K562 (cell line): ENCODE measurements at regions of chr1 and their contacts with region 1.

Region 1: GRCh38 chr1:11907275-11908094 is 18.7 kb downstream of the KIAA2013 start:
- DNase-seq: peak; percentile 86 to 98 (median 90)
- ATAC-seq: peak; percentile 72
- H3K4me3 ChIP-seq: no peak overlapping the region
- H3K27ac ChIP-seq: peak overlapping the region; percentile 100
- H3K4me1 ChIP-seq: peaks cover 15 to 27% of the 10 kb centered on the region in 2 experiments
- H3K27me3 ChIP-seq: no peaks in the 10 kb centered on the region
- CTCF ChIP-seq: peak; percentile 87 to 98 (median 96)
- EP300 ChIP-seq: no peak
- POLR2A ChIP-seq: no peak
- RAD21 ChIP-seq: peak; percentile 61 to 78

Region 2: DNA sequence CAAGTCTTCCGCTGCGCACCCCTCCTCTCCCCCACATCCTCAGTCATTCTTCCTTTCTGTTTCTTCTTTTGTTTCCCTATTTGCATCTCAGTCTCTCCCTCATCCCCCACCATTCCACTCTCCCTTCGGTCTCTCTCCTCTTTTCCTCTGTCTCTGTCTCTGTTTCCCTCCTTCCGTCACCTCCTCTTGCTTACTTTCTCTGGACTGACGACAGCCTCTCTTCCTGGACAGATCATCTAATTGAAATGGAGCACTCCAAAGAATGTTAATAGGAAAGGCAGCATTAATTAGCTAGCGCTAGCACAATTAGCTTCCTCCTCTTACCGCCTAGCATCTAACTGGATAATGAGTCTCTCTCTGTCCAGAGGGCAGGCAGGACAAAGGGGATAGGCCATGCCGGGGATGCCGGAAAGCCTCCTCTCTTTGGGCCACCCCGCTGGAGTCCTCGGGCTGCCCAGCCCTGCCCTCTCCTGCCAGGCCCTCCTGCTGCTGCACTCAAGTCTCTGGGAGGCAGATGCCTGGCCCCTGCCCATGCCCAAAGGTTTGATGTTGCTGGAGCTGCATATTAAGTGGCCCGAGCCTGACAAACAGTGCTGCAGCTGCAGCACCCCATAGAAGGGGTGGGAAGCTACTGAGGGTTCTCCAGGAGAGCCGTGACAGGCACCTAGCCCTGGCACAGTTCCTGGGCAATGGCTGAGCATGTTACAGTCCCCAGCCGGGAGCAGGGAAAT is 407.7 kb before region 1 on chr1:
- CTCF ChIA-PET with region 1: no interaction called
- POLR2A ChIA-PET with region 1: no interaction called
- in situ Hi-C with region 1: no loop called
- intact Hi-C with region 1: no loop called
- DNase-seq: no peak
- ATAC-seq: no peak
- H3K4me3 ChIP-seq: no peak overlapping the region
- H3K27ac ChIP-seq: no peak overlapping the region
- H3K4me1 ChIP-seq: peaks cover 0 to 10% of the 10 kb centered on the region in 2 experiments; a peak in 2 of 5 replicates
- H3K27me3 ChIP-seq: peaks cover 34 to 49% of the 10 kb centered on the region in 2 experiments; a peak in 4 of 5 replicates
- CTCF ChIP-seq: no peak
- EP300 ChIP-seq: no peak
- POLR2A ChIP-seq: no peak
- RAD21 ChIP-seq: no peak

Region 3: DNA sequence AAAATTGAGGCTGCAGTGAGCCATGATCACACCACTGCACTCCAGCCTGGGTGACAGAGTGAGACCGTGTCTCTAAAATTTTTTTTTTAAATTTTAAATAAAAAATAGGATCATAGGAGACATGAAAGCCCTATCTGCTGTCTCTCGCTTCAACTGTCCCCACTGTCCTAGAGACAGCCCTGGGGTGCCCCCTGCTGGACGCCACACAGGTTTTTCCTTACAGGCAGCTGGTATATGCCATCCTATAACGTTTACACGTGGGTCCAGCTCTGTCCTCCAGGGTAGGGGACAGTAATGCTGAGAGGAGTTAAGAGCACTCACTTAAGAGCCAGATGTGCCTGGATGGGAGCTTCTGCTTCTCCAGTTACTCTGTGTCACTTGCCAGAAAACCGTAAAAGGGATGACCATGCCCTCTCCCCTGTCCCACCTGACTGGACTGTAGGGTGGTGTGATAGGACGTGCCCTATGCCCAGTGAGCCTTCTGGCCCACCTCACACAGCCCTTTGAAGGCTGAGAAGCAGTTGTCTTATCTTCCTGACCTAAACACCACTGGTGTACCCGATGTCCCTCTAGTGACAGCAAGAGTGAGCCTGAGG is 261.7 kb before region 1 on chr1:
- CTCF ChIA-PET with region 1: interaction called, 5 read pairs
- POLR2A ChIA-PET with region 1: interaction called, 13 read pairs
- in situ Hi-C with region 1: no loop called
- intact Hi-C with region 1: no loop called
- DNase-seq: peak; percentile 77 to 90 (median 80)
- ATAC-seq: peak; percentile 59
- H3K4me3 ChIP-seq: no peak overlapping the region
- H3K27ac ChIP-seq: no peak overlapping the region
- H3K4me1 ChIP-seq: peaks cover 15 to 39% of the 10 kb centered on the region in 2 experiments; a peak in 4 of 5 replicates
- H3K27me3 ChIP-seq: peaks cover 2 to 13% of the 10 kb centered on the region in 2 experiments; a peak in 4 of 5 replicates
- CTCF ChIP-seq: peak; percentile 85 to 93 (median 92)
- EP300 ChIP-seq: no peak
- POLR2A ChIP-seq: no peak
- RAD21 ChIP-seq: peak; percentile 80 to 89

Region 4: DNA sequence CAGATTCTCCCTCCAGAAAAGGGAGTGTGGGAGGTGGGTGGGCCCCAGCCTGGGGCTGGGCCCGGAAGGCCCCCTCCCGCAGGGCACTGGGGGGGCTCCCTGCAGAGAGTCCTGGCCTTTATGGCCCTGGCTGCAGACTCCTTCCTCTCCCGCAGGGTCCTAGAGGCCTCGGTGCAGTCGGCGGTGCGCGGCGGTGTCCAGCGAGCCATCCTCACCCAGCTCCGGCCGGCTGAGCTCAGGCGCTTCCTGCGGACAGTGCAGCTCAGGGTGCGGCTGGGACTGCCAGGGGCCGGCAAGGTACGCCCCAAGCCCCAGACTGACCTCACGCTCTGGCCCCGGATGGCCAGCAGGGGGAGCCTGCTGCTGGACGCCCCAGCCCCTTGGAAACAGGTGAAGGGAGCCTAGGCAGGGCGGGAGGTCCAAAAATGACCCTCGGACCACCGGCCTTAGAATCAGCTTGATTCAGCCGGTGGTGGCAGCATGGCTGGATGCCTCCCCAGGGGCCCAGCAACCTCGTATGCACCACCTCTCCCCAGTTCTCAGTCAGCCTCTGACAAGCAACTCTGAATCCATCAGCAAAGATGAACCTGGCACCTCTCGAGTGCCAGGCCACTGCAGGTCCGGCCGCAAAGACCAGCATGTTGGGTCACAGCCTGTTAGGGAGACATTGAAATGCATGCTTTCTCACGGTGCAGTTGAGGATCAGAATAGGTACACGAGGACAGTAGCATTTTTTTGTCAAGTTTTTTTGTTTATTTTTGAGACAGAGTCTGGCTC is 122.3 kb before region 1 on chr1:
- CTCF ChIA-PET with region 1: no interaction called
- POLR2A ChIA-PET with region 1: interaction called, 107 read pairs
- in situ Hi-C with region 1: no loop called
- intact Hi-C with region 1: no loop called
- DNase-seq: peak; percentile 89 to 94 (median 92)
- ATAC-seq: peak; percentile 78
- H3K4me3 ChIP-seq: no peak overlapping the region
- H3K27ac ChIP-seq: peak overlapping the region; percentile 80; the same call in 2 of the 3 replicates
- H3K4me1 ChIP-seq: peaks cover 45 to 66% of the 10 kb centered on the region in 2 experiments
- H3K27me3 ChIP-seq: no peaks in the 10 kb centered on the region
- CTCF ChIP-seq: peak; percentile 90 to 96 (median 92)
- EP300 ChIP-seq: peak; percentile 47; the same call in 1 of the 2 replicates
- POLR2A ChIP-seq: peak; percentile 66
- RAD21 ChIP-seq: peak; percentile 67 to 83

Region 5: GRCh38 chr1:11838349-11839272 is 68.9 kb before region 1 on chr1:
- CTCF ChIA-PET with region 1: interaction called, 20 read pairs
- POLR2A ChIA-PET with region 1: interaction called, 304 read pairs
- in situ Hi-C with region 1: no loop called
- intact Hi-C with region 1: loop called (anchors 1 kb)
- DNase-seq: peak; percentile 87 to 92 (median 89)
- ATAC-seq: peak; percentile 85
- H3K4me3 ChIP-seq: no peak overlapping the region
- H3K27ac ChIP-seq: no peak overlapping the region; the same call in 2 of the 3 replicates
- H3K4me1 ChIP-seq: peaks cover 29 to 47% of the 10 kb centered on the region in 2 experiments
- H3K27me3 ChIP-seq: no peaks in the 10 kb centered on the region
- CTCF ChIP-seq: peak; percentile 98 to 99 (median 99)
- EP300 ChIP-seq: no peak
- POLR2A ChIP-seq: no peak
- RAD21 ChIP-seq: peak; percentile 100

Region 6: GRCh38 chr1:11918779-11919519 is 11.5 kb after region 1 on chr1:
- CTCF ChIA-PET with region 1: no interaction called
- POLR2A ChIA-PET with region 1: interaction called, 236 read pairs
- in situ Hi-C with region 1: no loop called
- intact Hi-C with region 1: no loop called
- DNase-seq: no peak
- ATAC-seq: no peak
- H3K4me3 ChIP-seq: no peak overlapping the region
- H3K27ac ChIP-seq: no peak overlapping the region
- H3K4me1 ChIP-seq: peaks cover 5 to 26% of the 10 kb centered on the region in 2 experiments; a peak in 4 of 5 replicates
- H3K27me3 ChIP-seq: no peaks in the 10 kb centered on the region
- CTCF ChIP-seq: no peak
- EP300 ChIP-seq: no peak
- POLR2A ChIP-seq: no peak
- RAD21 ChIP-seq: no peak

Region 7: DNA sequence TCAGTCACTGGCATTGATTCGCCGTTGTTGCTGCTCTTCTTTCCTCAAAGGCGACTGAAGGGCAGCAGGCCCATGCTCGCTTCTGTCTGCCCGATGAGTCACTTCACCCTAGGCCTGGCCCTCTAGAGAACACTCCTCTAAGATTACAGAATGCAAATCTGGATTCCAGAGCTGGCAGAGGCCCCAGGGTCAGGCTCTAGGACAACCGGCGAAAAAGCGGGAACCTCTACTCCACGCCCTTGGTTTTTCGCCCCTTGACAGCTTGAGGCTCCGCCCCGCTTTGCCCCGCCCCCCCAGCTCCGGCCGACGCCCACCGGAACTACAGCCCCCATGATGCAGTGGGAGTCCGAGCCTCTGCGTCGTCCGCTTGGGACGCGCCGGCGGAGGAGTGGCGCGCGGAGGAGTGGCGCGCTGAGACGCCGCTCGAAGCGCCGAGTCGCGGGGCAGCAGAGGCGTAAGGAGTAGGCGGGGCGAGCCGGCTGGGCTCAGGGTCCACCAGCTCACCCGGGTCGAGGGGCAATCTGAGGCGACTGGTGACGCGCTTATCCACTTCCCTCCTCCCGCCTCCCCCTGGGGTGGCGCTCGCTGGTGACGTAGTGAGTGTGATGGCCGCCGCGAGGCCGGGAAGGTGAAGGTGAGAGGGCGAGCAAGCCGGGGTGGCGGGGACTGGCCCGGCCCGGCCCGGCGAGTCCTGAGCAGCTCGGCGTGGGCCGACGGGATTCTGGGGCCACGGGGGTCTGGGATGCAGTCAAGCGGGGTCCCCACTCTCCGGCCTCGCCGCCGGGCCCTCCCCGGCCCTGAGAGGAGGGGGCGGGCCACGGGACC is 72.6 kb after region 1 on chr1 and contains the start of gene MFN2:
- CTCF ChIA-PET with region 1: no interaction called
- POLR2A ChIA-PET with region 1: interaction called, 141 read pairs
- in situ Hi-C with region 1: no loop called
- intact Hi-C with region 1: loop called (anchors 5 kb)
- DNase-seq: peak; percentile 98 to 99 (median 98)
- ATAC-seq: peak; percentile 94
- H3K4me3 ChIP-seq: peak within 1 kb of the TSS; percentile 65
- H3K27ac ChIP-seq: peak within 1 kb of the TSS; percentile 83
- H3K4me1 ChIP-seq: peaks cover 42 to 44% of the 10 kb centered on the region in 2 experiments
- H3K27me3 ChIP-seq: no peaks in the 10 kb centered on the region
- CTCF ChIP-seq: peak in 1 of 3 experiments; percentile 13; a peak in 1 of 6 replicates
- EP300 ChIP-seq: no peak; the same call in 1 of the 2 replicates
- POLR2A ChIP-seq: peak; percentile 95
- RAD21 ChIP-seq: no peak
- polyA plus RNA-seq, gene MFN2: 10.5 to 14.0 TPM

Region 8: DNA sequence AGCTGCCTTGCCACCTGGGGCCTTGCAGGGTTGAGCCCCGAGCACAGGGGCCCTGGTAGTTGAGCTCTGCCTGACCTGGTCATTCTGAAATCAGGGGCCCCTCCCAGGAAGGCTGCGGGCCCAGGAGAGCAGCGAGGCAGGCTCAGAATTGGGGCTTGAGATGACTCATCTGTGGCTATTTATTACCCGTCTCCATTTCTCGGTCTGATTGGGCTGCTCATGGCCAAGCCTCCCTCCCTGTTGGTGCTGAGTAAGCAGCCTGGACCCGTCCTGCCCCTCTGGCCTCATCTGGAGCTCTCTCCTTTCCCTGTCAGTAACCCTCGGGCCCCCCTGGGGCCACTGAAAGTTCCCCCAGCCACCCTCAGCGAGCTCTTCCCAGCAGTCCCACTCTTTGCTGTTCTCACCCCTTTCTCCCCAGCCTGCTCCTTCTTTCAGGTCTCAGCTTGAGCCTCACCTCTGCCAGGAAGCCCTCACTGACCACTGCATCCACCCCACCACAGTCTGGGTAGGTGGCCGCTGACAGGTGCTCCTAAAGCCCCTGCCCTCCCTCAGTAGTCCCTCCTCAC is 144.6 kb after region 1 on chr1:
- CTCF ChIA-PET with region 1: no interaction called
- POLR2A ChIA-PET with region 1: interaction called, 67 read pairs
- in situ Hi-C with region 1: no loop called
- intact Hi-C with region 1: no loop called
- DNase-seq: peak; percentile 80 to 94 (median 86)
- ATAC-seq: peak; percentile 96
- H3K4me3 ChIP-seq: no peak overlapping the region
- H3K27ac ChIP-seq: peak overlapping the region; percentile 54
- H3K4me1 ChIP-seq: peaks cover 20 to 44% of the 10 kb centered on the region in 2 experiments; a peak in 4 of 5 replicates
- H3K27me3 ChIP-seq: no peaks in the 10 kb centered on the region
- CTCF ChIP-seq: no peak
- EP300 ChIP-seq: peak; percentile 41
- POLR2A ChIP-seq: no peak
- RAD21 ChIP-seq: no peak